Esophagus squamous epithelium (tissue), 5 donors: ENCODE measurements at regions of chr18 and their contacts with region 1.

Region 1: GRCh38 chr18:37537868-37538525 is 27.6 kb downstream of the CELF4 start:
- DNase-seq: no peak
- H3K4me3 ChIP-seq: no peak overlapping the region
- H3K27ac ChIP-seq: no peak overlapping the region
- H3K4me1 ChIP-seq: no peaks in the 10 kb centered on the region
- H3K27me3 ChIP-seq: peaks cover 0 to 86% (median 0%) of the 10 kb centered on the region in 4 donors
- CTCF ChIP-seq: peak; percentile 41 to 84 (median 75)
- POLR2A ChIP-seq: no peak

Region 2: DNA sequence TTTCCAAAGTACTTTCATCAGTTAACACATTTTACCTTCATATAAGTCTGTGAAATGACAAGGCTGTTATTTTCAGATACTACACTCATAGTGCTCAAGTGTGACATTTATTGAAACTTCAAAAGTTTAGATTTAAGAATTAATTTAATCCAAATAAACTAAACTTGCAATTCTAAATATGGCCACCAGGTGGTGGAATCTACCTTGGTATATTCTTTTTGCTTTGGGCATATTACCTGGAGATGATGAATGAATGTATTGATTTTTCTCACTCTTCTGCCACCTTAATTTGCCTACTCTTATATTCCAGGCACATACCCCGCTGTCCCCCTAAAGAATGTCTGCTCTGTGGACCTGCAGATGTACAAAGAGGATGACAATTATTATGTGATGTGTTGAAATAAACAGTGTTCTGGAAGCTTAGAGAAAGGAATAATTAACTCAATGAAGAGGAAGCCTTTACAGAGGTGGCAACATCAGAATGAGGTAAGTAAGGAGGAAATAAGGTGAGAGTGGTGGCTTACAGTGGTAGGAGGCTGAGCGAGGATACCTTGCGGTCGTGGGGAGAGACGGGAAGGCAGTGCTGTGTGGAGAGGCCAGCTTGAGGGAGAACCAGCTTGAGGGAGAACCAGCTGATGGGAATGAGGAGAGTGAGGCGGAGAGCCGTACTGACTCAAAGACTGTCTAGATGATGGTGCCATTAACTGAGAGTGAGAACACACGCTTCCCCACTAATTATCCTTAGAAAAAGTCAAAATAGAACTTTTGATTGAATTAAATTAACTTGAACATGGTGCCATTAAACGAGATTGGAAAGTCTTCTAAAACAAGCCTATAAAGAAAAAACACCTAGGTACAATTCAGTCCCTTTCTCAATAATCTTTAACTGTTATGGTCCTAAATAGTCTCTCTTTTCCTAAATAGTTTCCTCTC is 151.9 kb before region 1 on chr18:
- intact Hi-C with region 1: loop called (anchors 10 kb)
- DNase-seq: no peak
- H3K4me3 ChIP-seq: no peak overlapping the region
- H3K27ac ChIP-seq: no peak overlapping the region
- H3K4me1 ChIP-seq: no peaks in the 10 kb centered on the region
- H3K27me3 ChIP-seq: peaks cover 0 to 53% (median 0%) of the 10 kb centered on the region in 4 donors
- CTCF ChIP-seq: peak; percentile 49 to 78 (median 68)
- POLR2A ChIP-seq: no peak

Region 3: GRCh38 chr18:37445368-37445767 is 92.6 kb before region 1 on chr18:
- intact Hi-C with region 1: loop called (anchors 5 kb)
- DNase-seq: no peak
- H3K4me3 ChIP-seq: no peak overlapping the region
- H3K27ac ChIP-seq: no peak overlapping the region
- H3K4me1 ChIP-seq: peaks cover 0 to 10% (median 0%) of the 10 kb centered on the region in 3 donors
- H3K27me3 ChIP-seq: peaks cover 0 to 41% (median 0%) of the 10 kb centered on the region in 4 donors
- CTCF ChIP-seq: no peak
- POLR2A ChIP-seq: no peak